ENCODE measurements at regions of chr1 and their contacts with region 1.

Region 1: DNA sequence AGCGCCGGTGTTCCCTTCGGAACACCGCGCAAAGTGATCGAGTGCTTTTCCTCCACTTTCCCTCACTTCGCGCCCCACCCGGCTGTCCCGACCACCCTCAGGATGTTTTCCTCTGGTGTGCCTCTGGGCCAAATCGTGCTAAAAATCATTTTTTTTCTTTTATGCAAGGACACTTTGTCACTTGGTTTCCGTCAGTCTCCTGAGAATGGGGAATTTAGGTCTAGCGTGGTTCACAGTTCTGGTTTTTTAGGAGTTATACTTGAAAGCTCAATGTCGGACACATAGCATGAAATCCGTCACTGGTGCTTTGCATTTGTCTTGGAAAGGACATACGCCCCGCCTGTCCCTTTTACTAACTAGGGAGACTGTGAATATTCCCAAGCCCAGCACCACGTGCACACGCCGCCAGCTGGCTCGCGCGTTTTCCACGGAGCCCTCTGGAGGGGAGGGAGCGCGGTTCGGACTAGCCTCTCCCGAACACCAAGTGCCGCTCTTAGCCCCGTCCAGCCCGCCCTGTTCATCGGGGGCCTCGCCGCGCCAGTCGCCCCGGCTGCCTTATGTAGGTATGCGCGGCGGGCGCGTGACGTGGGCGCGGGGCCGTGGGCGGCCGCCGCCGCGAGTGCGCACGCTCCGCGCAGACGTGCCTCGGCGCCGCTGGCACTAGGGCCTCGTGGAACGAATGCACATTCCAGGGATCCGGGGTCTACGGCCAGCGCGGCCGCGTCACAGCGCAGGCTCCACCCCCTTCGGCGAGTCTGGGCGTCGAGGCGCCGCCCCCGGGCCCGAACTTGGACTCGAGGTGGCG is 572 bp upstream of the IRF2BP2 start:
- DNase-seq: peak; percentile 68
- H3K4me3 ChIP-seq: peak overlapping the region; percentile 77
- H3K27me3 ChIP-seq: no peaks in the 10 kb centered on the region
- CTCF ChIP-seq: peak; percentile 19; the same call in 1 of the 2 replicates

Region 2: GRCh38 chr1:233982827-233983518 is 627.6 kb before region 1 on chr1:
- CTCF ChIA-PET with region 1: no interaction called
- POLR2A ChIA-PET with region 1: no interaction called
- DNase-seq: no peak
- H3K4me3 ChIP-seq: no peak overlapping the region
- H3K27me3 ChIP-seq: no peaks in the 10 kb centered on the region
- CTCF ChIP-seq: no peak

Region 3: GRCh38 chr1:234515821-234516241 is 94.7 kb before region 1 on chr1:
- CTCF ChIA-PET with region 1: no interaction called
- POLR2A ChIA-PET with region 1: interaction called, 16 read pairs
- DNase-seq: peak; percentile 63
- H3K4me3 ChIP-seq: no peak overlapping the region
- H3K27me3 ChIP-seq: no peaks in the 10 kb centered on the region
- CTCF ChIP-seq: no peak

Region 4: GRCh38 chr1:234715252-234716014 is 104.9 kb after region 1 on chr1:
- CTCF ChIA-PET with region 1: interaction called, 3 read pairs
- POLR2A ChIA-PET with region 1: interaction called, 12 read pairs
- DNase-seq: no peak
- H3K4me3 ChIP-seq: no peak overlapping the region
- H3K27me3 ChIP-seq: no peaks in the 10 kb centered on the region
- CTCF ChIP-seq: no peak